ENCODE measurements at regions of chr5 and their contacts with region 1.

Region 1: GRCh38 chr5:134370871-134371833 is at the start of gene UBE2B:
- DNase-seq: peak; percentile 98 to 99 (median 98)
- H3K4me3 ChIP-seq: peak within 1 kb of the TSS; percentile 86 to 92
- H3K4me3 Mint-ChIP-seq: peak within 1 kb of the TSS; percentile 96 to 99 (median 98)
- H3K27ac ChIP-seq: peak within 1 kb of the TSS; percentile 99
- H3K27ac Mint-ChIP-seq: peak within 1 kb of the TSS; percentile 97 to 100 (median 100)
- H3K4me1 ChIP-seq: peaks cover 52% of the 10 kb centered on the region
- H3K4me1 Mint-ChIP-seq: peaks cover 40 to 78% (median 49%) of the 10 kb centered on the region in 4 donors
- H3K27me3 ChIP-seq: no peaks in the 10 kb centered on the region
- H3K27me3 Mint-ChIP-seq: peaks cover 0 to 5% of the 10 kb centered on the region in 2 donors
- total RNA-seq, gene UBE2B: 121 to 124 TPM

Region 2: GRCh38 chr5:134555890-134556311 is 184.7 kb after region 1 on chr5:
- CTCF ChIA-PET with region 1: no interaction called
- POLR2A ChIA-PET with region 1: interaction called, 12 read pairs
- intact Hi-C with region 1: no loop called
- DNase-seq: peak; percentile 72 to 98 (median 79)
- H3K4me3 ChIP-seq: peak overlapping the region in 1 of 2 donors; percentile 14
- H3K4me3 Mint-ChIP-seq: peak overlapping the region in 7 of 8 donors; percentile 46 to 81 (median 63)
- H3K27ac ChIP-seq: peak overlapping the region; percentile 95
- H3K27ac Mint-ChIP-seq: peak overlapping the region; percentile 94 to 99 (median 98)
- H3K4me1 ChIP-seq: peaks cover 44% of the 10 kb centered on the region
- H3K4me1 Mint-ChIP-seq: peaks cover 35 to 53% (median 42%) of the 10 kb centered on the region in 4 donors
- H3K27me3 ChIP-seq: no peaks in the 10 kb centered on the region
- H3K27me3 Mint-ChIP-seq: no peaks in the 10 kb centered on the region

Region 3: DNA sequence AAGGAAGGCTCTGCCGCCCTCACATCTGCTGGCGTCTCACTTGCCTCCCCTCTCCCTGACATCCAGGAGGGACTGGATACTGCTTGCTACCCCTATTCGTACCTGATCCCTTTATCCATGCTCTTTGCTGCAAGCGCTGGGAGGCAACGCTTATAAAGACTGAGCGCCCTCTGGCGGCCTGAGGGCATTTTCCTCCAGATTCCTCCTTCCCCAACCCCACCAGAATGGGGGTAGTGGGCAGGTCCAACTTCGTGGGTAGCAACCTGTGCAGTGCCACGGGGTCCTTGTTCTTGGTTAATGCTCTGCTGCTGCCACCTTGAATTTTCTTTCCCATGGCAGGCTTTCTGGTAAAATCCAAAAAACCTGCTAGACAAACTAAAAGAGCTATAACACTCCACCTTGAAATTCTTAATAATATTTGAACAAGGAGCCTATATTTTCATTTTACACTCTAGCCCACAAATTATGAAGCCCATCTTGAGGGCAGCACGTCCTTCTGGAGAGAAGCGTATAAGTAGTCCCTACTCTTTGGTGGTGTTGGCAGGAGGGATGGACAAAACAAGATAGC is 206.7 kb after region 1 on chr5:
- CTCF ChIA-PET with region 1: interaction called, 8 read pairs
- POLR2A ChIA-PET with region 1: interaction called, 7 read pairs
- intact Hi-C with region 1: loop called (anchors 5 kb)
- DNase-seq: peak; percentile 65 to 70 (median 69)
- H3K4me3 ChIP-seq: no peak overlapping the region
- H3K4me3 Mint-ChIP-seq: no peak overlapping the region
- H3K27ac ChIP-seq: no peak overlapping the region
- H3K27ac Mint-ChIP-seq: peak overlapping the region; percentile 28 to 86 (median 78)
- H3K4me1 ChIP-seq: no peaks in the 10 kb centered on the region
- H3K4me1 Mint-ChIP-seq: peaks cover 3 to 17% (median 14%) of the 10 kb centered on the region in 4 donors
- H3K27me3 ChIP-seq: no peaks in the 10 kb centered on the region
- H3K27me3 Mint-ChIP-seq: no peaks in the 10 kb centered on the region

Region 4: GRCh38 chr5:134637161-134637582 is 266.0 kb after region 1 on chr5:
- CTCF ChIA-PET with region 1: no interaction called
- POLR2A ChIA-PET with region 1: interaction called, 5 read pairs
- intact Hi-C with region 1: loop called (anchors 5 kb)
- DNase-seq: no peak
- H3K4me3 ChIP-seq: no peak overlapping the region
- H3K4me3 Mint-ChIP-seq: no peak overlapping the region
- H3K27ac ChIP-seq: no peak overlapping the region
- H3K27ac Mint-ChIP-seq: no peak overlapping the region
- H3K4me1 ChIP-seq: peaks cover 4% of the 10 kb centered on the region
- H3K4me1 Mint-ChIP-seq: peaks cover 0 to 13% (median under 1%) of the 10 kb centered on the region in 4 donors
- H3K27me3 ChIP-seq: no peaks in the 10 kb centered on the region
- H3K27me3 Mint-ChIP-seq: no peaks in the 10 kb centered on the region

Region 5: DNA sequence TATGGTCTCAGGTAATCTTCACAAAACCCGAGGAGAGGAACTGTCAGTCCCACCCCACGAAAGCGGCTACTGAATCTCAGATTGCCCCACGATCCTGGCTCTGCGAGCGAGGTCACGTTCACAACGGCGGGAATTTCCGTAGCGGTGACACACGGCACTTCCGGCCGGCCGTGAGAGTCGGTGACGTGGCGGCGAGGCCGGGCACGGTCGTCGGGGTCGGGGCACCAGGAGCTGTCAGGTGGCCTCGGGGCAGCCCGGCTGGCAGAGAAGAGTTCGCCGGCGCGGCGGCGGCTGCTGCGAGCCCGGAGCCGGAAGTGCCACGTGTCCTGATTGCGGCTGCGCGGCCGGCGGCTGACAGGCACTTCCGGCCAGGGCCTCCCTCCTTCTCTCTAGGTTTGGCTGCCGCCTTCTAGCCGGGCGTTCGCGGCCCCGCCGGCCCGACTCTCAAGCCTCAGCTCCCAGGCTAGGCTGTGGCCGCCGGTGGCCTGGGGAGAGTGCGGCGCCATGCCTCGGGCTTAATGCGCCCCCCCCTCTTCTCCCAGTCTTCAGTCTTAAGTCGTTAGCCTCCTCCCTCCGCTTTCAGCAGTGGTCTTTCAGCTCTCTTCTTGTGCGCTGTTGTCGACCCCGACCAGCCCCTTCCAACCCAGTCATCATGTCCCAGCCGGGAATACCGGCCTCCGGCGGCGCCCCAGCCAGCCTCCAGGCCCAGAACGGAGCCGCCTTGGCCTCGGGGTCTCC is 277.4 kb after region 1 on chr5 and contains the start of gene SEC24A:
- CTCF ChIA-PET with region 1: no interaction called
- POLR2A ChIA-PET with region 1: interaction called, 8 read pairs
- intact Hi-C with region 1: loop called (anchors 1 kb)
- DNase-seq: peak; percentile 88 to 93 (median 90)
- H3K4me3 ChIP-seq: peak within 1 kb of the TSS; percentile 94 to 96
- H3K4me3 Mint-ChIP-seq: peak within 1 kb of the TSS; percentile 89 to 100 (median 97)
- H3K27ac ChIP-seq: peak within 1 kb of the TSS; percentile 99
- H3K27ac Mint-ChIP-seq: peak within 1 kb of the TSS; percentile 96 to 100 (median 99)
- H3K4me1 ChIP-seq: peaks cover 23% of the 10 kb centered on the region
- H3K4me1 Mint-ChIP-seq: peaks cover 16 to 33% (median 23%) of the 10 kb centered on the region in 4 donors
- H3K27me3 ChIP-seq: no peaks in the 10 kb centered on the region
- H3K27me3 Mint-ChIP-seq: no peaks in the 10 kb centered on the region
- total RNA-seq, gene SEC24A: 16.1 to 16.6 TPM

Region 6: DNA sequence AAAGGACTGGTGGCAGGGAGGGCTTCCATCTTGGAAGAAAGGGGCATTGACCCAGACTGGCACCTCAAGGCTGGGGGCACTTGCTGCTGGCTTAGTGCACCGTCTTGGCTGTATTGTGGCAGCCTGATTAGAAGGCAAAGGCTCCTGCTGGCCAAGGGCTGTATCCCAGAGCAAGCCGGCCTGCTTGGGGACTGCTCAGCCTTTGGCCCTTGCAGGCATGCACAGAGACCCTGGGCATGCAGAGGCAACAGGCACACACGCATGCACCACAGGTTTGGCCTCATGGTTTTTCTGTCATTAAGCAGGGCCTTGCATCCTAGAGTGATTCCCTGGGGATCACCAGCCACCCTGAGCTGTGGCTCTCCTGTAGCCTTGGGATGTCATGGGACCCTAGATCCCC is 633.9 kb after region 1 on chr5:
- CTCF ChIA-PET with region 1: no interaction called
- POLR2A ChIA-PET with region 1: no interaction called
- intact Hi-C with region 1: no loop called
- DNase-seq: no peak
- H3K4me3 ChIP-seq: no peak overlapping the region
- H3K4me3 Mint-ChIP-seq: no peak overlapping the region
- H3K27ac ChIP-seq: no peak overlapping the region
- H3K27ac Mint-ChIP-seq: no peak overlapping the region
- H3K4me1 ChIP-seq: no peaks in the 10 kb centered on the region
- H3K4me1 Mint-ChIP-seq: no peaks in the 10 kb centered on the region
- H3K27me3 ChIP-seq: no peaks in the 10 kb centered on the region
- H3K27me3 Mint-ChIP-seq: peaks cover 0 to 5% of the 10 kb centered on the region in 2 donors

Measured in CD4-positive, alpha-beta memory T cell (primary cell).